CD14-positive monocyte (primary cell): ENCODE measurements at regions of chr1 and their contacts with region 1.

Region 1: GRCh38 chr1:203702130-203702577 is 62.8 kb upstream of the LAX1 start:
- DNase-seq: peak; percentile 15 to 40 (median 34)
- H3K4me3 ChIP-seq: no peak overlapping the region
- H3K4me3 Mint-ChIP-seq: no peak overlapping the region
- H3K27ac ChIP-seq: no peak overlapping the region
- H3K27ac Mint-ChIP-seq: peak overlapping the region in 5 of 7 donors; percentile 24 to 84 (median 64)
- H3K4me1 ChIP-seq: peaks cover 0 to 9% of the 10 kb centered on the region in 2 donors
- H3K4me1 Mint-ChIP-seq: peaks cover 7% of the 10 kb centered on the region
- H3K27me3 ChIP-seq: no peaks in the 10 kb centered on the region
- H3K27me3 Mint-ChIP-seq: no peaks in the 10 kb centered on the region
- CTCF ChIP-seq: peak; percentile 97

Region 2: GRCh38 chr1:203267347-203267846 is 434.8 kb before region 1 on chr1:
- intact Hi-C with region 1: loop called in 1 of 2 experiments (anchors 10 kb)
- DNase-seq: peak; percentile 80 to 87 (median 81)
- H3K4me3 ChIP-seq: peak overlapping the region; percentile 35 to 79 (median 40)
- H3K4me3 Mint-ChIP-seq: peak overlapping the region; percentile 90 to 96
- H3K27ac ChIP-seq: peak overlapping the region in 1 of 2 donors; percentile 54
- H3K27ac Mint-ChIP-seq: peak overlapping the region; percentile 51 to 93 (median 78)
- H3K4me1 ChIP-seq: peaks cover 16% of the 10 kb centered on the region in 2 donors
- H3K4me1 Mint-ChIP-seq: peaks cover 13% of the 10 kb centered on the region
- H3K27me3 ChIP-seq: no peaks in the 10 kb centered on the region
- H3K27me3 Mint-ChIP-seq: peaks cover 3 to 10% (median 3%) of the 10 kb centered on the region in 3 donors
- CTCF ChIP-seq: peak; percentile 93

Region 3: GRCh38 chr1:203593723-203594122 is 108.4 kb before region 1 on chr1:
- intact Hi-C with region 1: loop called (anchors 10 kb)
- DNase-seq: peak; percentile 33 to 79 (median 46)
- H3K4me3 ChIP-seq: no peak overlapping the region
- H3K4me3 Mint-ChIP-seq: no peak overlapping the region
- H3K27ac ChIP-seq: no peak overlapping the region
- H3K27ac Mint-ChIP-seq: peak overlapping the region in 5 of 7 donors; percentile 40 to 93 (median 88)
- H3K4me1 ChIP-seq: peaks cover 20 to 21% of the 10 kb centered on the region in 2 donors
- H3K4me1 Mint-ChIP-seq: peaks cover 28% of the 10 kb centered on the region
- H3K27me3 ChIP-seq: no peaks in the 10 kb centered on the region
- H3K27me3 Mint-ChIP-seq: peaks cover 1 to 7% (median 1%) of the 10 kb centered on the region in 3 donors
- CTCF ChIP-seq: peak; percentile 48